ENCODE measurements at regions of chr2 and their contacts with region 1.

Region 1: GRCh38 chr2:111120253-111121027 is at the start of gene BCL2L11:
- DNase-seq: peak; percentile 93
- H3K4me3 Mint-ChIP-seq: peak within 1 kb of the TSS; percentile 97
- H3K27ac Mint-ChIP-seq: peak within 1 kb of the TSS; percentile 97
- H3K4me1 Mint-ChIP-seq: peaks cover 51% of the 10 kb centered on the region
- H3K27me3 Mint-ChIP-seq: peaks cover 4% of the 10 kb centered on the region
- total RNA-seq, gene BCL2L11: 335 and 347 TPM in 2 replicates

Region 2: DNA sequence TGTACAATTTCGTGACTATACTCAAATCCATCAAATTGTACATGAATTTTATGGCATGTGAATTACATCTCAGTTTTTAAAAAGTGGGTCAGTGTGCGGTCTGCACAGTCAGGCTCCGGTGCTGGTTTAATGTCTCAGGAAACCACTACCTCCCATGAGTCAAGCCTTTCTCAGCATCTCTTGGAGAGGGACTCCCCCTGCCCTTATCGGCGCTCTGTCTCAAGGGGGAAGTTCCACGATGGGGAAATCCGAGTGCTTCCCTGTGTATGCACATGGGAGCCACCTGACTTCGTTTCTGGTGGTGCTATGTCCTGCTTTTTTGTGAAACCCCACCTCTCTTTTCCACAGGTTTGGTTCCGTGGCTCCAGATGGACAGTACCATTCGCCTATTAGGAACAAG is 315.5 kb before region 1 on chr2:
- intact Hi-C with region 1: loop called (anchors 1 kb)
- DNase-seq: peak; percentile 66
- H3K4me3 Mint-ChIP-seq: peak overlapping the region; percentile 45
- H3K27ac Mint-ChIP-seq: peak overlapping the region; percentile 46
- H3K4me1 Mint-ChIP-seq: peaks cover 25% of the 10 kb centered on the region
- H3K27me3 Mint-ChIP-seq: peaks cover 42% of the 10 kb centered on the region

Region 3: GRCh38 chr2:110865188-110865587 is 255.3 kb before region 1 on chr2:
- intact Hi-C with region 1: loop called (anchors 1 kb)
- DNase-seq: no peak
- H3K4me3 Mint-ChIP-seq: peak overlapping the region; percentile 48
- H3K27ac Mint-ChIP-seq: peak overlapping the region; percentile 32
- H3K4me1 Mint-ChIP-seq: peaks cover 76% of the 10 kb centered on the region
- H3K27me3 Mint-ChIP-seq: peaks cover 19% of the 10 kb centered on the region

Region 4: DNA sequence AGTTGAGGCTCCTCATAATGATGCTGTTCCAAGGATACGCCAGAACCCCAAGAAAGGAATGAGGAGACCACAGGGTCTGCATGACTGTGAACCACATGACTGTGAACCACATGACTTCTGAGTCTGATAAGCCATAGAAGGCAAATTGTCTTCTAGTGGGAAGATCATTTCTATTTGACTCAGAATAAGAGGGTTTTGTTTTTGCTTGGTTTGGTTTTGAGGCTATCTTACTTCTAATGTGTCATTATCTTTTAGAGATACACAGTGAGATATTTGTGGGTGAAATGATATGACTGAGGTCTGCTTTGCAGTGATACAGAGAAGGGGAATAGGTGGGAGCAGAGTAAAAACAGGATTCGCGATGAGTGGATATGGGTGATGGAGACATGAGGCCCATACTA is 28.6 kb before region 1 on chr2:
- intact Hi-C with region 1: loop called (anchors 1 kb)
- DNase-seq: no peak
- H3K4me3 Mint-ChIP-seq: no peak overlapping the region
- H3K27ac Mint-ChIP-seq: no peak overlapping the region
- H3K4me1 Mint-ChIP-seq: peaks cover 14% of the 10 kb centered on the region
- H3K27me3 Mint-ChIP-seq: peaks cover 61% of the 10 kb centered on the region

Region 5: GRCh38 chr2:111168528-111169239 is 48.2 kb after region 1 on chr2:
- intact Hi-C with region 1: loop called (anchors 2 kb)
- DNase-seq: peak; percentile 61
- H3K4me3 Mint-ChIP-seq: peak overlapping the region; percentile 0
- H3K27ac Mint-ChIP-seq: peak overlapping the region; percentile 76
- H3K4me1 Mint-ChIP-seq: peaks cover 60% of the 10 kb centered on the region
- H3K27me3 Mint-ChIP-seq: peaks cover 12% of the 10 kb centered on the region

Region 6: GRCh38 chr2:111705711-111706336 is 585.4 kb after region 1 on chr2:
- intact Hi-C with region 1: loop called (anchors 1 kb)
- DNase-seq: peak; percentile 65
- H3K4me3 Mint-ChIP-seq: peak overlapping the region; percentile 62
- H3K27ac Mint-ChIP-seq: peak overlapping the region; percentile 86
- H3K4me1 Mint-ChIP-seq: peaks cover 93% of the 10 kb centered on the region
- H3K27me3 Mint-ChIP-seq: peaks cover 2% of the 10 kb centered on the region

Measured in activated T-helper 1 cell treated with anti-CD3 and anti-CD28 coated beads, Interleukin-12 subunit alpha, Interleukin-12 subunit beta, Interleukin-2, Interleukin-4 antibody, amounts not matched to agents 30 ng/mL and 10 ng/mL and 1 ng/mL, durations not matched to agents 14 hours and 24 hours and 36 hours (primary cell).